ENCODE measurements at regions of chr4 and their contacts with region 1.

Region 1: DNA sequence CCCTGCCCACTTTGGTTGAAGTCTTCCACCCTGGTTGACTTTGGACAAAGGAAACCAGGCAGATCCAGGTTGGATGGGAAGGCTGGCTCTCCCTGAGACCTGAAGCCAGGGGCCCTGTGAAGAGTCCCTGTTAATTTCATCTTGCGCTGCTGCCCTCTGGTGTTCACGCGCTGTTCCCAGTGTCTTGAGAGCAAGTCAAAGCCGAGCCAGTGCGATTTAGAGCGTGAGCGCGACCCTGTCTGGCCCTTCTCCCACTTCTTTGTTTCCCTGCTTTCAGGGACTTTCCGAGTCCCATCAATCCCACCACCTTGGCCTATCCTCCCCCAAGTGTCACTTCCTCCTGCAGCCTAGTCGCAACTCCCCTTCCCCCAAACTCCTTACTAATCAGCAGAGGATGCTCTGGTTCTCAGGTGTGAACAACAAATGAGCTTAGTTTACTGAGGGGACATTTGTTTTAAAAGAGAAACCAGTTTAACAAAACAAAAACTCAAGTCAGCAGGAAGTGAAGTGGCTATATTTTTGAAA is 25.8 kb upstream of the CHRNA9 start:
- DNase-seq: peak; percentile 84 to 93 (median 87)
- H3K4me3 ChIP-seq: peak overlapping the region; percentile 46
- H3K4me3 Mint-ChIP-seq: peak overlapping the region; percentile 71 to 88 (median 81)
- H3K27ac ChIP-seq: peak overlapping the region; percentile 62
- H3K27ac Mint-ChIP-seq: peak overlapping the region; percentile 94 to 99 (median 98)
- H3K4me1 ChIP-seq: peaks cover 79% of the 10 kb centered on the region
- H3K4me1 Mint-ChIP-seq: peaks cover 57 to 85% (median 64%) of the 10 kb centered on the region in 3 donors
- H3K27me3 ChIP-seq: no peaks in the 10 kb centered on the region
- H3K27me3 Mint-ChIP-seq: peaks cover 0 to 2% of the 10 kb centered on the region in 2 donors

Region 2: DNA sequence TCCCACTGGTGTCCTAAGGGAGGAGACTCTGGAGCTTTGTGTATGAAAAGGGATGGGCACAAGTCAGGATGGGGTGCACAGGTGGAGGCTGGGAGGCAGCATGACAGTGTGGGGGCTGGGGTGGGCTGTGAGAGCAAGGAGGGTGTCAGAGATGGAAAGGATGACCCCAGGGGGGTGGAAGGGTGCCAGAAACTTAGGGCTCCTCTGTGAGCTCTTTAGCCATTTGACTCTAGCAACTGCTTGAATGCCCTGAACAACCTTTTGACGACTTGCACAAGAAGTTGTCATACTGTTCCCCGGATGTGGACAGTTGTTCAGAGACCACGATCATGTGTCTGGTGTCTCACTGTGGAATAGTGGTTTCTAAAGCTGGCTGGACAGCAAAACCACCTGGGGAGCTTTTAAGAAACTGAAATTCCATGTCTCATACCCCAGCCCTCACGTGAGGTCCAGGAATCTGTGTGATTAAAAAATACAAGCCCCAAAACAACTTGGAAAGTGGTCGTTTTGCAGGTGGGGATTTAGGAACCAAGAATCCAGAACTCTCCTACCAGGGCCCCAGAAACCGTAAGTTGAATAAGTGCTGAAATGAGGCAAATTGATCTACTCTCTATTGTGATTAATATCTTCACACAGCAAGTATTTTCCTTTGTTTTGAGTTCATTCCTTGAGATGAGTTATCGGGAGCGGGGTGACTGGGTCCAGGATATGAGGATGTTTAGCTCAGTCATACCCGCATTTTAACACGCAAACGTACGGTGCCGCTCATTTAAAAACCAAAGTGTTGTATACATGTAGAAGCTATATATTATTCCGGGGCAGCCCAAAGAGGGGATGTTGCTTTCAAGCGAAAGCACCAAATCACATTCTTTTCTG is 109.1 kb before region 1 on chr4:
- CTCF ChIA-PET with region 1: interaction called, 26 read pairs
- POLR2A ChIA-PET with region 1: interaction called, 26 read pairs
- DNase-seq: peak; percentile 38 to 81 (median 63)
- H3K4me3 ChIP-seq: peak overlapping the region; percentile 93
- H3K4me3 Mint-ChIP-seq: peak overlapping the region; percentile 93 to 100 (median 97)
- H3K27ac ChIP-seq: peak overlapping the region; percentile 96
- H3K27ac Mint-ChIP-seq: peak overlapping the region; percentile 94 to 100 (median 99)
- H3K4me1 ChIP-seq: peaks cover 38% of the 10 kb centered on the region
- H3K4me1 Mint-ChIP-seq: peaks cover 47 to 70% (median 58%) of the 10 kb centered on the region in 3 donors
- H3K27me3 ChIP-seq: no peaks in the 10 kb centered on the region
- H3K27me3 Mint-ChIP-seq: peaks cover 0 to 1% of the 10 kb centered on the region in 2 donors

Region 3: DNA sequence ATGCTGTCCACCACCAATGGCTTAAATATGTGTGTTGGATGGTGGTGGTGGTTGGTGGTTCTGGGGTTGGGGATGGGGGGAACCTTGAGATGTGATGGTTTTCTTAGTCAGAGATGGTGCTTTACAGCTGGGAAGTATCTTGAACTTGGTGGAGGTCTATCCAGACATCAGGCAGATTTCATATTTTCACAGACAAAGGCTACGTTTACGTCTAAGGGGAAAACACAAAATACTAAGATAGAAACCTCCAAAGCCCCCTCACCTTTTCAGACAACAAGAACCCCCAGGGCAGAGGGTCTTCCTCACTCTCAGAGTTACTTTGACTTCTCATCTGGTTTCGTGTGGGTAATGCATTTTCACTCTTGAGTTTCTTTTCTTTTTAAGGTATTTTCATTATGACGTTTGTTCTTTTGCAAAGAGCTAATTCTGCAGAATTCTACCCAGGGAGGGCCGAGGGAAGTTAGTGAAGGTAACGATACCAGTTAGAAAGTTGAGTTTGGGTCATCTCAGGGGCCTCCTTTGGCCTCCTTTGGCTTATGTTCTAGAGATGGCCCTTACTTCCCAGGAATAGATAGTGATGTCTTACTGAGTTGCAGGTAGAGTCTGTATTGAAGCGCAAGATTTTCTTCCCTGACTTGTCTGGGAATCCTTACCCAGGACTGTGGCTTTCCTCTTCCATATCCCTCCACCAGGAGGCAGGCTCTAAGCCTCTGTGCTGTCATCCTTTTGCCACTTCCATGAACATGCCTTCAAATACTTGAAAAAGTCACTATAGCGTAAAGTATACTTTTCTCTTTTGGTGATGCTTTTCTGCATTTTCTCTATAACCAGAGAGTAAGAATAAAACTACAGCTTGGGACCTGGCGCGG is 80.6 kb before region 1 on chr4:
- CTCF ChIA-PET with region 1: interaction called, 120 read pairs
- POLR2A ChIA-PET with region 1: interaction called, 7 read pairs
- DNase-seq: no peak
- H3K4me3 ChIP-seq: peak overlapping the region; percentile 42
- H3K4me3 Mint-ChIP-seq: peak overlapping the region; percentile 78 to 88 (median 83)
- H3K27ac ChIP-seq: no peak overlapping the region
- H3K27ac Mint-ChIP-seq: peak overlapping the region; percentile 91 to 98 (median 95)
- H3K4me1 ChIP-seq: peaks cover 96% of the 10 kb centered on the region
- H3K4me1 Mint-ChIP-seq: peaks cover 83 to 100% (median 97%) of the 10 kb centered on the region in 3 donors
- H3K27me3 ChIP-seq: no peaks in the 10 kb centered on the region
- H3K27me3 Mint-ChIP-seq: peaks cover 0 to 1% of the 10 kb centered on the region in 2 donors

Region 4: GRCh38 chr4:40255393-40256281 is 53.7 kb before region 1 on chr4:
- CTCF ChIA-PET with region 1: interaction called, 14 read pairs
- POLR2A ChIA-PET with region 1: interaction called, 4 read pairs
- DNase-seq: no peak
- H3K4me3 ChIP-seq: peak overlapping the region; percentile 1
- H3K4me3 Mint-ChIP-seq: peak overlapping the region in 5 of 7 donors; percentile 3 to 67 (median 55)
- H3K27ac ChIP-seq: no peak overlapping the region
- H3K27ac Mint-ChIP-seq: peak overlapping the region; percentile 48 to 94 (median 82)
- H3K4me1 ChIP-seq: peaks cover 71% of the 10 kb centered on the region
- H3K4me1 Mint-ChIP-seq: peaks cover 41 to 77% (median 46%) of the 10 kb centered on the region in 3 donors
- H3K27me3 ChIP-seq: no peaks in the 10 kb centered on the region
- H3K27me3 Mint-ChIP-seq: no peaks in the 10 kb centered on the region

Region 5: GRCh38 chr4:40289366-40290188 is 19.7 kb before region 1 on chr4:
- CTCF ChIA-PET with region 1: interaction called, 111 read pairs
- POLR2A ChIA-PET with region 1: interaction called, 15 read pairs
- DNase-seq: peak in 1 of 5 donors; percentile 75
- H3K4me3 ChIP-seq: peak overlapping the region; percentile 22
- H3K4me3 Mint-ChIP-seq: peak overlapping the region in 6 of 7 donors; percentile 2 to 69 (median 52)
- H3K27ac ChIP-seq: no peak overlapping the region
- H3K27ac Mint-ChIP-seq: peak overlapping the region; percentile 57 to 95 (median 90)
- H3K4me1 ChIP-seq: peaks cover 42% of the 10 kb centered on the region
- H3K4me1 Mint-ChIP-seq: peaks cover 35 to 60% (median 44%) of the 10 kb centered on the region in 3 donors
- H3K27me3 ChIP-seq: no peaks in the 10 kb centered on the region
- H3K27me3 Mint-ChIP-seq: no peaks in the 10 kb centered on the region

Region 6: GRCh38 chr4:40423735-40424134 is 114.4 kb after region 1 on chr4:
- CTCF ChIA-PET with region 1: no interaction called
- POLR2A ChIA-PET with region 1: no interaction called
- DNase-seq: no peak
- H3K4me3 ChIP-seq: no peak overlapping the region
- H3K4me3 Mint-ChIP-seq: no peak overlapping the region
- H3K27ac ChIP-seq: no peak overlapping the region
- H3K27ac Mint-ChIP-seq: no peak overlapping the region
- H3K4me1 ChIP-seq: no peaks in the 10 kb centered on the region
- H3K4me1 Mint-ChIP-seq: no peaks in the 10 kb centered on the region
- H3K27me3 ChIP-seq: no peaks in the 10 kb centered on the region
- H3K27me3 Mint-ChIP-seq: peaks cover 3 to 12% of the 10 kb centered on the region in 2 donors

Region 7: DNA sequence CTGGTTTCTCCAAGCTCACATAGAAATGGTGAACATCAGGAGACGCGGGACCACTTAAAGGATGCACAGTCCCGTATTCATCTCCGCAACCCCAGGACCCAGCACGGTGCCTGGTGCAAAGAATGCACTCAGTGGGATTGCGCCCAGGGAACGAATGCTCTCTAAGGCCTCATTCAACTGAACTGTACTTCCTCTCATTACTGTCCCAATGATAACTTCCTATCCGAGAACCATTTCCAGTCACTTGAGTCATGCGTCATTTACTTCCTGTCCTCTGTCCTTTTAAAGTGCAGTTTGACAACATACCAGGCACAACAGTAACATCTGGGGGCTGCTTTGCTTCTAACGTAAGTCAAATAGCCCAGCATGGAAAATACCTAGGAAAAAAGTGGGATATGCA is 244.7 kb after region 1 on chr4:
- CTCF ChIA-PET with region 1: no interaction called
- POLR2A ChIA-PET with region 1: no interaction called
- DNase-seq: no peak
- H3K4me3 ChIP-seq: no peak overlapping the region
- H3K4me3 Mint-ChIP-seq: no peak overlapping the region
- H3K27ac ChIP-seq: no peak overlapping the region
- H3K27ac Mint-ChIP-seq: no peak overlapping the region
- H3K4me1 ChIP-seq: no peaks in the 10 kb centered on the region
- H3K4me1 Mint-ChIP-seq: peaks cover 11 to 16% (median 12%) of the 10 kb centered on the region in 3 donors
- H3K27me3 ChIP-seq: no peaks in the 10 kb centered on the region
- H3K27me3 Mint-ChIP-seq: no peaks in the 10 kb centered on the region